H1 (cell line): ENCODE measurements at regions of chr4 and their contacts with region 1.

Region 1: DNA sequence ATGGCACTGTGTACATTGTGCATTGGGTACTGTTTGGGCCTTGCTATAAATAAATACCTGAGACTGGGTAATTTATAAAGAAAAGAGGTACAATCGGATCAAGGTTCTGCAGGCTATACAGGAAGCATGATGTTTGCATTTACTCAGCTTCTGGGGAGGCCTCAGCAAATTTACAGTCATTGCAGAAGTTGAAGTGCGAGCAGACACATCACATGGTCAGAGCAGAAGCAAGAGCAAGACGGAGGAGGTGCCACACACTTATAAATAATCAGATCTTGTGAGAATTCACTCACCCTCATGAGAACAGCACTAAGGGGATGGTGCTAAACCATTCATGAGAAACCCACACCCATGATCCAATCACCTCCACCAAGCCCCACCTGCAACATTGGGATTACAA is 505.0 kb downstream of the ARAP2 start:
- DNase-seq: no peak
- H3K4me3 ChIP-seq: no peak overlapping the region
- H3K27ac ChIP-seq: no peak overlapping the region
- H3K4me1 ChIP-seq: no peaks in the 10 kb centered on the region
- H3K27me3 ChIP-seq: no peaks in the 10 kb centered on the region
- CTCF ChIP-seq: no peak
- EP300 ChIP-seq: no peak
- POLR2A ChIP-seq: no peak
- RAD21 ChIP-seq: no peak

Region 2: GRCh38 chr4:35725131-35725530 is 14.2 kb before region 1 on chr4:
- CTCF ChIA-PET with region 1: interaction called, 13 read pairs
- POLR2A ChIA-PET with region 1: no interaction called
- DNase-seq: peak in 1 of 2 experiments; percentile 1
- H3K4me3 ChIP-seq: no peak overlapping the region
- H3K27ac ChIP-seq: no peak overlapping the region
- H3K4me1 ChIP-seq: no peaks in the 10 kb centered on the region
- H3K27me3 ChIP-seq: no peaks in the 10 kb centered on the region
- CTCF ChIP-seq: peak in 2 of 3 experiments; percentile 30 to 53; a peak in 3 of 4 replicates
- EP300 ChIP-seq: no peak
- POLR2A ChIP-seq: no peak
- RAD21 ChIP-seq: peak; percentile 49 to 54

Region 3: GRCh38 chr4:35754047-35754446 is 14.7 kb after region 1 on chr4:
- CTCF ChIA-PET with region 1: no interaction called
- POLR2A ChIA-PET with region 1: no interaction called
- DNase-seq: no peak
- H3K4me3 ChIP-seq: no peak overlapping the region
- H3K27ac ChIP-seq: no peak overlapping the region
- H3K4me1 ChIP-seq: no peaks in the 10 kb centered on the region
- H3K27me3 ChIP-seq: no peaks in the 10 kb centered on the region
- CTCF ChIP-seq: no peak
- EP300 ChIP-seq: no peak
- POLR2A ChIP-seq: no peak
- RAD21 ChIP-seq: no peak